GM23248 (cell line): ENCODE measurements at regions of chr9 and their contacts with region 1.

Region 1: DNA sequence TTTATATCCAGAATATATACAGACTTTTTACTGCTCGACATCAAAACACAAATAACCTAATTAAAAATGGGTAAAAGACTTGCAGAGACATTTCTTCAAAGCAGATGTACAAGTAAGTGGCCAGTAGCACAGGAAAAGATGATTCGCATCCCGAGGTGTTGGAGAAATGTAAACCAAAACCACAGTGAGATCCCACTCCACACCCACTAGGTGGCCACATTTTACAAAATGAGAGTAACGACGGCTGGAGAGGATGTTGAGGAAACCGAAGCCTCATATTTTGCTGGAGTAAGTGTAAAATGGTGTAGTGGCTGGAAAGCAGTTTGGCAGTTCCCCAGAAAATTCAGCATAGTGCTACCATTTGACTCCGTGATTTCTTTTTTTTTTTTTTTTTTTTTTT is 21.2 kb upstream of the GBGT1 start:
- DNase-seq: peak; percentile 89
- H3K4me3 ChIP-seq: no peak overlapping the region
- H3K27ac ChIP-seq: no peak overlapping the region
- H3K4me1 ChIP-seq: no peaks in the 10 kb centered on the region
- H3K27me3 ChIP-seq: peaks cover 51% of the 10 kb centered on the region

Region 2: GRCh38 chr9:133485361-133486260 is 300.6 kb after region 1 on chr9:
- in situ Hi-C with region 1: loop called (anchors 5 kb)
- DNase-seq: no peak
- H3K4me3 ChIP-seq: no peak overlapping the region
- H3K27ac ChIP-seq: no peak overlapping the region
- H3K4me1 ChIP-seq: no peaks in the 10 kb centered on the region
- H3K27me3 ChIP-seq: peaks cover 9% of the 10 kb centered on the region; the same call in 1 of the 2 replicates